ENCODE measurements at regions of chr12 and their contacts with region 1.

Region 1: DNA sequence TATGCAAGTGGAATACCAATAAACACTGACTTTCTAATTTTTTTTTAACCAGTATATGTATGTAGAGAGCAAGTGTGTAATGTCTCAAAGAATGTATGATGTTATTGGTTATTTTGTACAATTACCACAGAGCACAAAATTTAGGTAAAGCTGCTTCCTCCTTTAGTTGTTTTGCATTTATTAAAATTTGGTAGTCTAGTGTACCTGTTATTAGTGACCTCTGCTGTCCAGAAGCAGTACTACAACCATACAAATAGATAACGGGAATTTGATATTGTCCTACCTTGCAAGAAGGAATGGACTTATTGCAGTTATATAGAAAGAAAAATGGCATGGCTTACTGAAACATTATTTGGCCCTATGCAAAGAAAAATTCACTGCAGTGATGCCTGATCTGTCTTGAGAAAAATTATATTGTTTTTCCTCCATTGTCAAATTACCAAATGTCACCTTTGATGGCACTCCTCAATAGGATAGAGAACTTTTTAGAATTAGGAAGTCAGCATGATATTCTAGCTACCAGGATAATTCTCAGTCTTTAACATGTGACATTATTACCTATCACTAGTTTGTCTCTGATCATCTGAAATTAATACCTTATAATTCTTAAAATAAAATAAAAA is 153.9 kb upstream of the RMST start:
- DNase-seq: peak; percentile 26
- H3K4me3 ChIP-seq: no peak overlapping the region
- H3K27ac ChIP-seq: no peak overlapping the region
- H3K4me1 ChIP-seq: no peaks in the 10 kb centered on the region
- H3K27me3 ChIP-seq: no peaks in the 10 kb centered on the region
- CTCF ChIP-seq: peak; percentile 68

Region 2: DNA sequence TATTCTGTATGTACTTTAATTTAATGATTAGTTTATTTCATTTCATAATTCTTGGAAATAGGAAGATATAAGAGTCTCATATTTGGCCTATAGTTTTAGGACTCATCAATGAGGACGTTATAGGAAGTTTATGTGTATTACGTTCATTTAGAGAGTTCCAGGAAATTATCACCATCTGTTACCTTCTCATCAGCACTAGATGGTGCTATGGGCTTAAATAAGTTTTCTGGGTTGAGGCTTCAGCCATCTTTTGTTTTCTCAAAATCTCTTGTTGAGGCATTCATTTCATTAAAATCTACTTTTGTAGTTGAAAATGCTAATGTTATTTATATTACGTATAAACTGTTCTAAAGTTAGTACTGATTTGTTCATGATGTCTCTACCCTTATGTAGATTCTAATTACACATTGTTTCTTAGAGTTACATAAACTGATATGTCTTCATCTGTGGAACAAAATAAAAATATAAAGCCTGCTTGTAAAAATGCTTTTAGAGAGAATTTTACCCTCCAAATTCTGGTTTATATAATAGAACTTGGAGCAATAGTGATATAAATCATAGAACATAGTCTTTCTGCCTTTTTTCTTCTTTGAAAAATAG is 730.1 kb before region 1 on chr12:
- CTCF ChIA-PET with region 1: no interaction called
- dilution Hi-C with region 1: no loop called
- in situ Hi-C with region 1: loop called (anchors 10 to 25 kb)
- intact Hi-C with region 1: loop called (anchors 2 kb)
- DNase-seq: peak; percentile 33
- H3K4me3 ChIP-seq: no peak overlapping the region
- H3K27ac ChIP-seq: no peak overlapping the region
- H3K4me1 ChIP-seq: no peaks in the 10 kb centered on the region
- H3K27me3 ChIP-seq: no peaks in the 10 kb centered on the region
- CTCF ChIP-seq: peak; percentile 64 to 67

Region 3: DNA sequence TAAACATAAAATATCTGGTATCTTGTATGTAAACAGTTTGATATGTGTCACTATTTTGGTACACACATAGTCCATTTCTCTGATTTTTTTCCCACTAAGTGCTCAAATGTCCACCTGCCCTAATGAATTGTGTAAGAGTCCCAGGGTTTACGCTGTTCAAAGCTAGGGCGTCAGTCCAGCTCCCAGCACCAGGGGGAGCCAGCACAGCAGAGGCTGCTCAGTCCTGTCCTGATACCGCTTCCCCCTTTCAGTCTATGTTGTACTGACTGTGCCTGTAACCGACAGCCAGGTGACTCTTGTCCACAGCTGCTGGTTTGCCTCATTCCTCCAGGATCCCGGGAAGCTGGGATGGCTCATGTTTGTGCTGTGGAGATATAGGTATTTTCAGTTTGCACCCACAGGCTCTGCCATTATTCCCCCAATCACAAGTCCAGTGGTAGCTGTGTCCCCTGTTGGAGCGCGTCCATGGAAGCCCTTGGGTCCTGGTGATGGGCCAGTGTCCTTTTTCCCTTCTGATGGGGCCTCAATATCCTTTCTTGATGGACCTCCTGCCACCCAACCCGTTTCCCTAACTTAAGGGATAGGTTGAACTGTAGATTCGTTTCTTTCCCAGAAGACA is 159.6 kb before region 1 on chr12:
- CTCF ChIA-PET with region 1: no interaction called
- dilution Hi-C with region 1: no loop called
- in situ Hi-C with region 1: no loop called
- intact Hi-C with region 1: loop called (anchors 2 kb)
- DNase-seq: peak; percentile 26
- H3K4me3 ChIP-seq: no peak overlapping the region
- H3K27ac ChIP-seq: no peak overlapping the region
- H3K4me1 ChIP-seq: no peaks in the 10 kb centered on the region
- H3K27me3 ChIP-seq: no peaks in the 10 kb centered on the region
- CTCF ChIP-seq: peak; percentile 86 to 92

Region 4: DNA sequence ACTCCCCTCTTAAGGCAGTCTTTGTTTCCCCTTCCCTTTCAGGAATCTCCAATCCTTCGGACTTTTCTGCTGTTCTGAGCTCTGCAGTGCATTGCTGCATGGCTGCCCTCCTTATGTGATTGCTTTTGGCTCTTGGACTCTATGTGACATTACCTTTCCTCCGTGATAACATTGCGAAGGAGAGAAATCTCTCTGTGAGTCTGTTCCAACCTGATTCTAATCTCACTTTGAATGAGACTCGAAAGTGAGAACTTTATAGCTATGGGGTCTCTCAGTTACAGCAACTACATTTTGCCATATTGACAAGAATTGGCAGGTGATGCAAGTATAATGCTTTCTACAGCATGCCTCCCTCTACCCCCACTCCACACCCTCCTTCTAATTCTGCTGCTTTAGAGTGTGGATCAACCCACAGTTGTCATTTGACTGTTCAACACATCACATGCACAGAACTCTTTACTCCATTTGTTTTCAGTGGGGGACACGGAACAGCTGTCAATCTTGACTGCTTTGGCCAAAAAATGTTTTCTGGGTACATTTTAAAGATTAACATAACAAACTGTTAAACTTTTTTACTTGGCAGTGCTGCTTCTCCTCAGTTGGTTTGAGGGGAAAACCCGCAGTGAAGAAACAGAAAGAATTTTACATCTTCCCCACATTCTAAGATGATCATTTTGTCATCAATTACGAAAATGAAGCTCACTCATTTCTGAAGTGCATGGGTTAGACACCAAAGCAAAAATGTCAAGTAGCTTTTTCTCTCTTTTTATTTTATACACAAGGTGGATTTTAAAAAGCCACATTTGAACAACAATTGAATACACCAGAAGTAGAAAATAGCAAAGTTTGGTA is 28.4 kb after region 1 on chr12:
- CTCF ChIA-PET with region 1: no interaction called
- dilution Hi-C with region 1: no loop called
- in situ Hi-C with region 1: no loop called
- intact Hi-C with region 1: no loop called
- DNase-seq: no peak
- H3K4me3 ChIP-seq: no peak overlapping the region
- H3K27ac ChIP-seq: no peak overlapping the region
- H3K4me1 ChIP-seq: no peaks in the 10 kb centered on the region
- H3K27me3 ChIP-seq: peaks cover 3% of the 10 kb centered on the region
- CTCF ChIP-seq: no peak